CD8-positive, alpha-beta memory T cell (primary cell): ENCODE measurements at regions of chr1 and their contacts with region 1.

Region 1: DNA sequence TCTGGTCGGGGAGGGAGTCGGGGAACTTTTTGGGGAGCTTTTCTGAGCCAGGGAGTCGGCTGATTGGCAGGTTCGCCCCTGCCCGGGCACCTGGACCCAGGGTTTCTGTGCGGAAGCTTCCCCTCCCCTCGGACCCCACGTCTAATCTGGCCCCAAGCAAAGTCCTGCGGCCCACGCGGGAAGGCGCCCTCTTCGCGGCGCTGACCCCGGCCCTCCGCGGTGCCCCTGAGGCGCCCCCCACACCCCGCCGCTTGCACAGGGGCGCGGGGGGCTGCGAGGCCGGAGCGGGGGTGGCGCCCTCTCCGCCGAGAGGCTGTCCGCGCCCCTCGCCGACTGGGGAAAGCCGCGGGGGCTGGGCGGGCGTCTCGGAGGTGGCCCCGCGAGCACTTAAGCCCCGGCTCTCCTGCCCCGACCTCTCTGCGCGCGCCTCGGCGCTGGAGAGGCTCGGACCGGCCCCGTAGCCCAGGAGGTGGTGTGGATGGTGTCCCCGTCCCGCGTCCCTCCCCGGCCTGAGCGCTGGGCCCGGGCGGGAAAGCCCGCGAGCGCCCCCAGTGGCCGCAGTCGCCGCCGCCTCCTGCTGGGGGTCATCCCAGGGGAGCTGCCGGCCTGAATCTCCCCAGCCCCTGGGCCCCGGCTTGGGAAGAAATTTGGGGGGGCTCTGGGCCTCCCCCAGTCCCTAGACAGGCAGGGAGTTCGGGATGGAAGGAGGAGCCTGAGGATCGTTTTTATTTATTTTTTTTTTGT is 1.7 kb upstream of the HES4 start:
- DNase-seq: peak; percentile 57 to 70 (median 64)
- H3K4me3 ChIP-seq: peak overlapping the region; percentile 20
- H3K4me3 Mint-ChIP-seq: peak overlapping the region; percentile 54 to 88 (median 78)
- H3K27ac ChIP-seq: peak overlapping the region; percentile 63
- H3K27ac Mint-ChIP-seq: peak overlapping the region in 2 of 8 donors; percentile 3 to 88
- H3K4me1 ChIP-seq: peaks cover 20% of the 10 kb centered on the region
- H3K4me1 Mint-ChIP-seq: peaks cover 10 to 21% (median 12%) of the 10 kb centered on the region in 3 donors
- H3K27me3 ChIP-seq: peaks cover 43% of the 10 kb centered on the region
- H3K27me3 Mint-ChIP-seq: peaks cover 33 to 48% of the 10 kb centered on the region in 2 donors

Region 2: DNA sequence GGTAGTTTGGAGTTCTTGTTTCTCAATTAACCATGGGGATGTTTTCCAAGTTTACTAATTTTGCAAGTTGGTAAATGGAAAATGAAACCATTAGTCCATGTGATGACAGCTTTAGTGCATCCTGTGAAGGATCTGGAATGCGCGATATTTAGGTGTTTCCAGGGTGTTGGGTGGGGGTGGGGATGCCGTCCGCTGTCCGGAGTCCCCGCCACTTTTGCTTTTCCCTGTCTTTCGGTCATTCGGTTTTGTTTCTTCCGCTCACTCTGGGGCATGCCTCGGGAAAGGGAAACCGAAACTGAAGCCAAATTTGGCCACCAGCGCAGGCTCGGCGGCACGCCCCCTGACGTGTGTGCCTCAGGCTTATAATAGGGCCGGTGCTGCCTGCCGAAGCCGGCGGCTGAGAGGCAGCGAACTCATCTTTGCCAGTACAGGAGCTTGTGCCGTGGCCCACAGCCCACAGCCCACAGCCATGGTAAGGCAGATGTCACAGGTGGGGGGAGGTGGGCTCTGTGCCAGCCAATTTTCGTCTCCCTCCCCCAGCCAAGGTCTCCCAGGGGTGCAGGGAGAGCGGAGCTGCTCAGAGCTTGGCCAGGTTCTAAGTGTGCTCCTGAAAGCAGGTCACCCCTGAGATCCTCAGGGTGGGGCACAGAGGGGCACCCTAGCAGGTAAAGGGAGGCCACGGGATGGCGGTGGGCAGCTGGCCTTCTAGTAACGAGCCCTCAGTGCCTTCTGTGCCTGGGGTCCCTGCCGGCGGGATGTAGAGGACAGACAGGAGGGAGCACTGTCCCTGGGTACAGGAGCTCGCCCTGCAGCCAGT is 11.7 kb after region 1 on chr1 and contains the start of gene ISG15:
- CTCF ChIA-PET with region 1: interaction called, 21 read pairs
- POLR2A ChIA-PET with region 1: interaction called, 6 read pairs
- DNase-seq: peak; percentile 84 to 94 (median 87)
- H3K4me3 ChIP-seq: peak within 1 kb of the TSS; percentile 87
- H3K4me3 Mint-ChIP-seq: peak within 1 kb of the TSS; percentile 94 to 99 (median 97)
- H3K27ac ChIP-seq: peak within 1 kb of the TSS; percentile 83
- H3K27ac Mint-ChIP-seq: peak within 1 kb of the TSS; percentile 93 to 99 (median 98)
- H3K4me1 ChIP-seq: peaks cover 21% of the 10 kb centered on the region
- H3K4me1 Mint-ChIP-seq: peaks cover 23 to 38% (median 26%) of the 10 kb centered on the region in 3 donors
- H3K27me3 ChIP-seq: no peaks in the 10 kb centered on the region
- H3K27me3 Mint-ChIP-seq: peaks cover 3 to 12% of the 10 kb centered on the region in 2 donors
- total RNA-seq, gene ISG15: 16.9 to 20.4 TPM